ENCODE measurements at regions of chr14 and their contacts with region 1.

Region 1: DNA sequence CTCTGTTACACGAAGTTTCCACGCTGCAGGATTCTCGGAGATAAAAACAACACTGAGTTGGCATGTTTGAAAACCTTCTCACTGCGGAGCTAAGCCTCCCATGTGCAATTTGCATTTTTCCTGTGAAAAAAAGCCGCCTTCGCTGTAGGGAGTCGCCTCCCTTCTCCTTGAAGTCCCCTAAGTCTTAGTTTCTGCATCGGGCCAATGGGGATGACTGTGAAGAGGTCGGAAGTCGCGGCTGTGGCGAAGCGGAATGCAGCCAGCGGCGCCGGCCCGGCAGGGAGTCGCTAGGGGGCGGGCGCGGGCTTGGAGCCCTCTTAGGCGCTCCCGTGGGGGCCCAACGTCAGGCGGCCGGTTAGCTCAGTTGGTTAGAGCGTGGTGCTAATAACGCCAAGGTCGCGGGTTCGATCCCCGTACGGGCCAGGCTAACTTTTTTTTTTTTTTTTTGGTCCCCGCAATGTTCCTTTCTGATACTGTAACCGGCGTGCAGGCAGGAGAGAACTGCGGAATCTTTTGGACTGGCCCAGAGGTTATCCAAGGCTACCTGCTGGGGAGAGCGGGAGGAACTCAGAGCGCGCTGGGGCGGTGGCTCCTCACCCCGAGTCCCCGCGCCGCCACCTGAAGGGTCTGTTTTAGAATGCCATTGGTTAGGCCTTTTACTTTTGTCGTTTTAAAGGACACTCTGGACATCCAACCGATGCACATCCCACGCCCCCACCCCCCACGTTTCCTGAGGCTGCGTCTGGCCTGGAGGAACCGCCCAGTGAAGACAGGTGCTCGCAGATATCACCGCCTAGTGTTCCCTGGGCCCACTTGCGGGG is 2.6 kb upstream of the ZNF839 start:
- DNase-seq: peak; percentile 86 to 100 (median 95)
- ATAC-seq: peak; percentile 55
- H3K4me3 ChIP-seq: peak overlapping the region; percentile 57 to 74
- H3K4me3 Mint-ChIP-seq: peak overlapping the region; percentile 93
- H3K27ac ChIP-seq: peak overlapping the region; percentile 42 to 73
- H3K27ac Mint-ChIP-seq: peak overlapping the region; percentile 94
- H3K4me1 ChIP-seq: peaks cover 42% of the 10 kb centered on the region
- H3K4me1 Mint-ChIP-seq: peaks cover 59% of the 10 kb centered on the region
- H3K27me3 ChIP-seq: no peaks in the 10 kb centered on the region
- H3K27me3 Mint-ChIP-seq: no peaks in the 10 kb centered on the region
- CTCF ChIP-seq: peak; percentile 82

Region 2: GRCh38 chr14:102063091-102063802 is 253.7 kb before region 1 on chr14:
- CTCF ChIA-PET with region 1: interaction called, 3 read pairs
- POLR2A ChIA-PET with region 1: no interaction called
- intact Hi-C with region 1: loop called in 1 of 2 experiments (anchors 1 kb)
- DNase-seq: peak; percentile 45 to 86 (median 66)
- ATAC-seq: peak; percentile 95
- H3K4me3 ChIP-seq: no peak overlapping the region
- H3K4me3 Mint-ChIP-seq: no peak overlapping the region
- H3K27ac ChIP-seq: no peak overlapping the region
- H3K27ac Mint-ChIP-seq: no peak overlapping the region
- H3K4me1 ChIP-seq: no peaks in the 10 kb centered on the region
- H3K4me1 Mint-ChIP-seq: peaks cover 12% of the 10 kb centered on the region
- H3K27me3 ChIP-seq: no peaks in the 10 kb centered on the region
- H3K27me3 Mint-ChIP-seq: no peaks in the 10 kb centered on the region
- CTCF ChIP-seq: peak; percentile 32

Region 3: DNA sequence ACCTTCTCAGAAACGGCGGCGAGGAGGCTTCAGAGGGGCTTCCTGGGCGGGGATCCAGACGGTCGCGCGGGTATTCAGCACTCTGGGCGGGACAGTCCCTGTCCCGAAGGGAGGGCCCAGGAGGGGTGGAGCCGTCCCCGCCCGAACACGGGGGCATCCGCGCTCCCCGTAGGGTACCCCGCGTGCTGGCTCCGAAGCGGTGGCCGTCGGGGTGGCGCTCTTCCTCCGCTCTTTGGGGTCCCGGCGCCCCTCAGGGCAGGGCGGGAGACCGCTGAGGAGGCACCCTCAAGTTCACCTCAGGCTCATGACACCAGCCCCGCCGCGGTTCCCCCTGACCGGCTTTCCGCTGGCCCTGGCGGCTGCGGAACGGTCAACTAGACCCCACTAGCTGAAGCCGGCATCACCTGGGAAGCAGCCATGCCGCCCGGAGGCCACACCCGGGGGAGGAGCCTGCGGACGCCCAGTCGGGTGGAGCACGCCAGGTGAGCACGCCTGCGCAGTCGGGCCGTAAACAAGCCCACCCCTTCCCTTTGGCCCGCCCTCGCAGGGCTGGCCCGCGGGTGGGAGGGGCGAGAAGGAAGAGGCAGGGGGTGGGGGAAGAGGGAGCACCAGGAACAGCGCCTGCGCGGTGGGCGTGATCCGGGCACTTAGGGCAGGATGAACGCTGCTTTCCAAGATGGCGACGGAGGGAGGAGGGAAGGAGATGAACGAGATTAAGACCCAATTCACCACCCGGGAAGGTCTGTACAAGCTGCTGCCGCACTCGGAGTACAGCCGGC is 177.5 kb before region 1 on chr14 and contains the start of gene WDR20:
- CTCF ChIA-PET with region 1: interaction called, 3 read pairs
- POLR2A ChIA-PET with region 1: interaction called, 3 read pairs
- intact Hi-C with region 1: loop called (anchors 1 kb)
- DNase-seq: peak; percentile 98 to 100 (median 99)
- ATAC-seq: peak; percentile 96
- H3K4me3 ChIP-seq: peak within 1 kb of the TSS; percentile 94 to 95
- H3K4me3 Mint-ChIP-seq: peak within 1 kb of the TSS; percentile 99
- H3K27ac ChIP-seq: peak within 1 kb of the TSS; percentile 87 to 91
- H3K27ac Mint-ChIP-seq: peak within 1 kb of the TSS; percentile 98
- H3K4me1 ChIP-seq: peaks cover 25% of the 10 kb centered on the region
- H3K4me1 Mint-ChIP-seq: peaks cover 29% of the 10 kb centered on the region
- H3K27me3 ChIP-seq: no peaks in the 10 kb centered on the region
- H3K27me3 Mint-ChIP-seq: no peaks in the 10 kb centered on the region
- CTCF ChIP-seq: no peak
- total RNA-seq, gene WDR20: 40.8 to 46.3 TPM

Region 4: GRCh38 chr14:102220031-102220430 is 96.9 kb before region 1 on chr14:
- CTCF ChIA-PET with region 1: no interaction called
- POLR2A ChIA-PET with region 1: no interaction called
- intact Hi-C with region 1: no loop called
- DNase-seq: no peak
- ATAC-seq: no peak
- H3K4me3 ChIP-seq: no peak overlapping the region
- H3K4me3 Mint-ChIP-seq: no peak overlapping the region
- H3K27ac ChIP-seq: no peak overlapping the region
- H3K27ac Mint-ChIP-seq: peak overlapping the region; percentile 73
- H3K4me1 ChIP-seq: no peaks in the 10 kb centered on the region
- H3K4me1 Mint-ChIP-seq: no peaks in the 10 kb centered on the region
- H3K27me3 ChIP-seq: no peaks in the 10 kb centered on the region
- H3K27me3 Mint-ChIP-seq: no peaks in the 10 kb centered on the region
- CTCF ChIP-seq: no peak

Region 5: GRCh38 chr14:102304611-102305509 is 12.1 kb before region 1 on chr14 and contains the start of gene MOK:
- CTCF ChIA-PET with region 1: interaction called, 47 read pairs
- POLR2A ChIA-PET with region 1: interaction called, 12 read pairs
- intact Hi-C with region 1: loop called (anchors 1 kb)
- DNase-seq: peak; percentile 94 to 99 (median 98)
- ATAC-seq: peak; percentile 92
- H3K4me3 ChIP-seq: peak within 1 kb of the TSS; percentile 83 to 97
- H3K4me3 Mint-ChIP-seq: peak within 1 kb of the TSS; percentile 91
- H3K27ac ChIP-seq: peak within 1 kb of the TSS; percentile 84 to 88
- H3K27ac Mint-ChIP-seq: peak within 1 kb of the TSS; percentile 94
- H3K4me1 ChIP-seq: peaks cover 5% of the 10 kb centered on the region
- H3K4me1 Mint-ChIP-seq: peaks cover 10% of the 10 kb centered on the region
- H3K27me3 ChIP-seq: no peaks in the 10 kb centered on the region
- H3K27me3 Mint-ChIP-seq: peaks cover 2% of the 10 kb centered on the region
- CTCF ChIP-seq: no peak
- total RNA-seq, gene MOK: 2.7 to 3.6 TPM

Region 6: GRCh38 chr14:102516531-102517415 is 199.8 kb after region 1 on chr14:
- CTCF ChIA-PET with region 1: interaction called, 10 read pairs
- POLR2A ChIA-PET with region 1: no interaction called
- intact Hi-C with region 1: loop called (anchors 2 kb)
- DNase-seq: peak; percentile 33 to 81 (median 60)
- ATAC-seq: peak; percentile 93
- H3K4me3 ChIP-seq: peak overlapping the region; percentile 51
- H3K4me3 Mint-ChIP-seq: peak overlapping the region; percentile 83
- H3K27ac ChIP-seq: no peak overlapping the region
- H3K27ac Mint-ChIP-seq: no peak overlapping the region
- H3K4me1 ChIP-seq: peaks cover 5% of the 10 kb centered on the region
- H3K4me1 Mint-ChIP-seq: peaks cover 5% of the 10 kb centered on the region
- H3K27me3 ChIP-seq: peaks cover 0 to 3% of the 10 kb centered on the region in 2 experiments
- H3K27me3 Mint-ChIP-seq: peaks cover 4% of the 10 kb centered on the region
- CTCF ChIP-seq: peak; percentile 85